Esophagus squamous epithelium (tissue), 5 donors: ENCODE measurements at regions of chr2 and their contacts with region 1.

Region 1: GRCh38 chr2:207706936-207707809 is 4.3 kb upstream of the CCNYL1 start:
- DNase-seq: no peak
- H3K4me3 ChIP-seq: no peak overlapping the region
- H3K27ac ChIP-seq: peak overlapping the region in 1 of 4 donors; percentile 13
- H3K4me1 ChIP-seq: peaks cover 0 to 20% (median 11%) of the 10 kb centered on the region in 3 donors
- H3K27me3 ChIP-seq: no peaks in the 10 kb centered on the region
- CTCF ChIP-seq: no peak
- POLR2A ChIP-seq: no peak

Region 2: DNA sequence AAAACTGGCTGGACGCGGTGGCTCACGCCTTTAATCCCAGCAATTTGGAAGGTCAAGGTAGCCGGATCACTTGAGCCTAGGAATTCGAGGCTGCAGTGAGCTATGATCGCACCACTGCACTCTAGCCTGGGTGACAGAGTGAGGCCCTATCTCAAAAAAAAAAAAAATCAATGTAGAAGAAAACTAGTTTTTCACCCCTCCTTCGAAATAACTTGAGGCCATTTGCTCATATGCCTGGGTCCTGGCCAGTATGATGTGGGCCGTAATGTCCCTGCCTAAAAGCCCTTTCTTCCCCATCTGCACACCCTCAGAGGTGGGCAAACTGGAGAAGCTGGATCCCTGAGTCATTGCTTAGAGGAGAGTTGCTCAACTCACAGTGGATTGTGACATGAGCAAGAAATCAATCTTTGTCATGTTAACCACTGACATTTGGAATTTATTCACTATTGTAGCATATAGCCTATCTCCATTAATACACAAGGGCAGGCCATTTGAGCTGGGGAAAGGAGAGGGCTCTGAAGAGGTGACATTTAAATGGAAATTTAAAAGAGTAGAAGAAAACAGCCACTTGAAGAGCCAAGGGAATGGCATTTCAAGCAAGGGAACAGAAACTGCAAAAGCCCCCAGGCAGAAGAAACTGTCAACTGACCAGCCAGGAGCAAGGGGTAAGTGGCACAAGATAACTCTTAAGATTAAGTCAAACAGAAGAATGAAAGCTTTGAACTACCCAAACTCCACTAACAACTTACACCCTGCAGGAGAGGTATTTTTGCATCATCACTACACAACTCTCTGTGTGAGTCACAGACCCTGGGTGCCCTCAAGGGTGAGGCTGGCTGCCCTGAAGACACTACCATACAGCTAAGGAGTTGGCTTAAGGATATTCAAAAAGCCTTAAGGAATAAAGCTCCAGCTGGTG is 74.3 kb before region 1 on chr2:
- intact Hi-C with region 1: loop called (anchors 10 kb)
- DNase-seq: no peak
- H3K4me3 ChIP-seq: no peak overlapping the region
- H3K27ac ChIP-seq: peak overlapping the region in 3 of 4 donors; percentile 73 to 84 (median 82)
- H3K4me1 ChIP-seq: peaks cover 0 to 56% (median 0%) of the 10 kb centered on the region in 3 donors
- H3K27me3 ChIP-seq: no peaks in the 10 kb centered on the region
- CTCF ChIP-seq: peak in 1 of 6 experiments; percentile 12
- POLR2A ChIP-seq: no peak